Activated CD8-positive, alpha-beta T cell treated with anti-CD3 and anti-CD28 coated beads for 36 hours (primary cell): ENCODE measurements at regions of chr17 and their contacts with region 1.

Region 1: DNA sequence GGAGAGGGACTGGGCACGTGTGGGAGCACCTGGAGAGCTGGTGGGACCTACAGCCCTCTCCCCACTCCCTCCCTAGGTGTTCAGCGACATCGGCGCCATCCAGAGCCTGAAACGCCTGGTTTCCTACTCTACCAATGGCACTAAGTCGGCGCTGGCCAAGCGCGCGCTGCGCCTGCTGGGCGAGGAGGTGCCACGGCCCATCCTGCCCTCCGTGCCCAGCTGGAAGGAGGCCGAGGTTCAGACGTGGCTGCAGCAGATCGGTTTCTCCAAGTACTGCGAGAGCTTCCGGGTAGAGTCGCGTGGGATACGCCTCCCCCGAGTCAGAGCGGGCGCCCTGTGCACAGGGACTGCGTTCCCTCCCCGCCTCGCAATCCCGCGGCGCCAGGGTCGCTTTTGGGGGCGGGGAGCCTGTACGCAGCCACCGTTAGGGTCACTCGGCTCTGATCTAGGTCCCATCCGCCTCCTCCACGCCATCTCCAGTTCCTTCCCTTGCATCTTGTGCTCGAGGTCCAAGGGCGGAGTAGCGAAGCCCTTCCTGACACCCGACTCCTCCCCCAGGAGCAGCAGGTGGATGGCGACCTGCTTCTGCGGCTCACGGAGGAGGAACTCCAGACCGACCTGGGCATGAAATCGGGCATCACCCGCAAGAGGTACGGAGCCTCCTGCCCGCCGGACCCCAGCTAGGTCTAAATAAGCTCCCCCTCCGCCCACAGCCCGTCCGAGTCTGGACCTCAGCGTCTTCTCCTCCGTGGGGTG is 13.0 kb downstream of the SARM1 start:
- DNase-seq: peak; percentile 80
- ATAC-seq: peak; percentile 94
- H3K4me3 Mint-ChIP-seq: peak overlapping the region; percentile 84
- H3K27ac Mint-ChIP-seq: peak overlapping the region; percentile 63
- H3K4me1 Mint-ChIP-seq: peaks cover 20% of the 10 kb centered on the region
- H3K27me3 Mint-ChIP-seq: peaks cover 2% of the 10 kb centered on the region
- CTCF ChIP-seq: no peak

Region 2: DNA sequence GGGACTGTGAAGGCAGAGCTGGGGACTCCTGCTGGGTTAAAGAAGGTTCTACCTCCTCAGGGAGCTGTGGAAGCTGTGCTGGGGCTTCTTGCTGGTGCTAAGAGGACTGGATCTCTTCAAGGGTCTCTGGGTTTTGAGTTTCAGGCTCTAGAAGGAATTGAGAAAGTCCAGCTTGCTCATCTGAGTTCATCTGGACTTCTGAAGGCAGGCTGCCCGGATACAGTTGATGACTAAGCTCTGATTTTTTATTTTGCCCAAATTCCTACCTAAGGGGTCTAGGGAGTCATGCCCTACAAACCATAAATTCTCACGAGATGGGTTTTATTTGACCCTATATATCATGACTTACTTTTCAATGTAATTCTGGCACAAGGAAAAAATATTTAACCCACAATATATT is 112.3 kb before region 1 on chr17:
- CTCF ChIA-PET with region 1: no interaction called
- POLR2A ChIA-PET with region 1: no interaction called
- intact Hi-C with region 1: no loop called
- DNase-seq: no peak
- ATAC-seq: no peak
- H3K4me3 Mint-ChIP-seq: no peak overlapping the region
- H3K27ac Mint-ChIP-seq: no peak overlapping the region
- H3K4me1 Mint-ChIP-seq: peaks cover 3% of the 10 kb centered on the region
- H3K27me3 Mint-ChIP-seq: peaks cover 43% of the 10 kb centered on the region
- CTCF ChIP-seq: no peak

Region 3: DNA sequence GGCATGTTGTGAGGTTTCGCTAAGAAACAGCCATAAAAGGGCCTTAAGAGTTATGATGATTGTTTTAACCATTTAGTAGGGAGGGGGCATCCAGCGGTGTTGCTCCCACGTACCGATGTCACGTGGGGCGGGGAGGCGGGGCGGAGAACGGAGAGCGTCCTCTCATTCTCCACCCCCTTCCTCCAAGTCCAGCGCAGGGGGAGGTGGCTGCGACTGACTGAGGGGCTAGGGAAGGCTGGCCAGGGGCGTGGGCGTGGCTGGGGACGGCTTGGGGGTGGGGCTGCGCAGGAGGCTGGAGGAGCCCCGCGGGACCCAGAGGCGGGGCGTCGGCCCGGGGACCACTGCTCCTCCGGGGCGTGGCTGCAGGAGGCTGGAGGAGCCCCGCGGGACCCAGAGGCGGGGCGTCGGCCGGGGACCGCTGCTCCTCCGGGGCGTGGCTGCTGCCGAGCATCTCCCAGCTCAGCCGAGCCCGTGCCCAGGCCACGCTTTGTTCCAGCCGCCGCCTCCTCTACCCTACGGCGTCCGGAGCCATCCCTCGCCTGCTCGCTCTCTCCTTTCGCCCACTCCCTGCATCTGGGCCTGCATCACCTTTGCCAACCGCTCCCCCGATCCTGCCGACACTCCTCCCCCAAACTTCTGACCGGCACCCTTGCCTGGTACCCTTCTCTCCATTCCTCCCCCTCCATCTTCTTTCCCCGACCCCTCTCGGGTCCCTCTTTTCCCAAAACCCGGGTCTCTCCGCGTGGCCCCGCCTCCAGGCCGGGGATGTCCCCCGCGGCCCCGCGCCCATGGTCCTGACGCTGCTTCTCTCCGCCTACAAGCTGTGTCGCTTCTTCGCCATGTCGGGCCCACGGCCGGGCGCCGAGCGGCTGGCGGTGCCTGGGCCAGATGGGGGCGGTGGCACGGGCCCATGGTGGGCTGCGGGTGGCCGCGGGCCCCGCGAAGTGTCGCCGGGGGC is 12.9 kb before region 1 on chr17 and contains the start of gene SARM1:
- CTCF ChIA-PET with region 1: interaction called, 4 read pairs
- POLR2A ChIA-PET with region 1: interaction called, 22 read pairs
- intact Hi-C with region 1: no loop called
- DNase-seq: peak; percentile 97
- ATAC-seq: peak; percentile 95
- H3K4me3 Mint-ChIP-seq: peak within 1 kb of the TSS; percentile 84
- H3K27ac Mint-ChIP-seq: peak within 1 kb of the TSS; percentile 86
- H3K4me1 Mint-ChIP-seq: peaks cover 20% of the 10 kb centered on the region
- H3K27me3 Mint-ChIP-seq: no peaks in the 10 kb centered on the region
- CTCF ChIP-seq: no peak
- total RNA-seq, gene SARM1: 16.7 to 19.8 TPM

Region 4: DNA sequence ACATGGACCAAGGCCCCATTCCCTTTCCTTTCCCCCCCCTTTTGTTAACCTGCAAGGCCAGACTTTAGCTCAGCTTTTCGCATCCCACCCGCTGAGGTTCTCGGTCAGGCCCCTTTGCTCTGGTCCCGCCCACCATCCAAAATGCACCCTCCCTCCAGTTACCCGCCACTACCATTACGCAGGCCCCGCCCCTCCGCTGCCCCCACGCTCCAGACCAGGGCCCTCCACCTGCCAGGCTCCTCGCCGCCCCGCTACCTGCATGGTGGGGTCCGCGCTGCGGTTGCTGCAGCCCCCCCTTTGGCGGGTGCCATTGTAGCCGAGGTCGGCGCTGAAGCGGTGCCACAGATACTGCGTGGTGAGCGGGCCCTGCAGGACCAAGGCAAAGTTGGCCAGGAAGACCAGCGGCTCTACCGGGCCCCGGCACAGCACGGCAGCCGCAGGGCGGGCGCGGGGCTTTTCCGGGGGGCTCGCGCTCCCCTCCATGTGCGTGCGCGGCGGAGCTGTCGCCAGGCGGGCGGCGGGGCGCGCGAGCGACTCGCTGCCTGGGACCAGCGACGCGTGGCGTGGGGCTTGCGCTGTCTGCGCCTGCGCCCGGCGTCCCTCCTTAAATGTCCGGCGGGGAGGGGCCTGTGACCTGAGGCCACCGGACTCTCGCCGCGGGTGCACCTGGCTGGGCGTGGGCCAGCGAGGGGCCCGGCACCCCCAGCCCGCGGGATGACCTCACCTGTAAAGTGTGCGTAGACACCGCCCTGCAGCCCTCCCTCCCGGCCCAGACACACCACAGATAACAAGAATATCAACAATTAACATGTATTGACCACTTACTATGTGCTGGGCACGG is 21.4 kb after region 1 on chr17 and contains the start of gene SLC46A1:
- CTCF ChIA-PET with region 1: interaction called, 3 read pairs
- POLR2A ChIA-PET with region 1: interaction called, 17 read pairs
- intact Hi-C with region 1: no loop called
- DNase-seq: peak; percentile 82
- ATAC-seq: peak; percentile 95
- H3K4me3 Mint-ChIP-seq: peak within 1 kb of the TSS; percentile 67
- H3K27ac Mint-ChIP-seq: peak within 1 kb of the TSS; percentile 32
- H3K4me1 Mint-ChIP-seq: peaks cover 2% of the 10 kb centered on the region
- H3K27me3 Mint-ChIP-seq: no peaks in the 10 kb centered on the region
- CTCF ChIP-seq: no peak
- total RNA-seq, gene SLC46A1: 2.1 to 3.1 TPM

Region 5: GRCh38 chr17:28416703-28417311 is 32.3 kb after region 1 on chr17:
- CTCF ChIA-PET with region 1: interaction called, 18 read pairs
- POLR2A ChIA-PET with region 1: interaction called, 3 read pairs
- intact Hi-C with region 1: no loop called
- DNase-seq: peak; percentile 72
- ATAC-seq: peak; percentile 97
- H3K4me3 Mint-ChIP-seq: no peak overlapping the region
- H3K27ac Mint-ChIP-seq: no peak overlapping the region
- H3K4me1 Mint-ChIP-seq: peaks cover 2% of the 10 kb centered on the region
- H3K27me3 Mint-ChIP-seq: peaks cover 4% of the 10 kb centered on the region
- CTCF ChIP-seq: peak; percentile 76